ENCODE measurements at regions of chr15 and their contacts with region 1.

Region 1: GRCh38 chr15:94287794-94288246 is 56.5 kb downstream of the MCTP2 start:
- DNase-seq: peak; percentile 91
- ATAC-seq: peak; percentile 92
- H3K4me3 ChIP-seq: peak overlapping the region; percentile 2 to 56 (median 28)
- H3K4me3 Mint-ChIP-seq: peak overlapping the region; percentile 84
- H3K27ac ChIP-seq: peak overlapping the region; percentile 90 to 93
- H3K27ac Mint-ChIP-seq: peak overlapping the region; percentile 90
- H3K4me1 ChIP-seq: peaks cover 65 to 72% of the 10 kb centered on the region in 2 donors
- H3K4me1 Mint-ChIP-seq: peaks cover 72% of the 10 kb centered on the region
- H3K27me3 ChIP-seq: no peaks in the 10 kb centered on the region
- H3K27me3 Mint-ChIP-seq: no peaks in the 10 kb centered on the region
- CTCF ChIP-seq: no peak

Region 2: DNA sequence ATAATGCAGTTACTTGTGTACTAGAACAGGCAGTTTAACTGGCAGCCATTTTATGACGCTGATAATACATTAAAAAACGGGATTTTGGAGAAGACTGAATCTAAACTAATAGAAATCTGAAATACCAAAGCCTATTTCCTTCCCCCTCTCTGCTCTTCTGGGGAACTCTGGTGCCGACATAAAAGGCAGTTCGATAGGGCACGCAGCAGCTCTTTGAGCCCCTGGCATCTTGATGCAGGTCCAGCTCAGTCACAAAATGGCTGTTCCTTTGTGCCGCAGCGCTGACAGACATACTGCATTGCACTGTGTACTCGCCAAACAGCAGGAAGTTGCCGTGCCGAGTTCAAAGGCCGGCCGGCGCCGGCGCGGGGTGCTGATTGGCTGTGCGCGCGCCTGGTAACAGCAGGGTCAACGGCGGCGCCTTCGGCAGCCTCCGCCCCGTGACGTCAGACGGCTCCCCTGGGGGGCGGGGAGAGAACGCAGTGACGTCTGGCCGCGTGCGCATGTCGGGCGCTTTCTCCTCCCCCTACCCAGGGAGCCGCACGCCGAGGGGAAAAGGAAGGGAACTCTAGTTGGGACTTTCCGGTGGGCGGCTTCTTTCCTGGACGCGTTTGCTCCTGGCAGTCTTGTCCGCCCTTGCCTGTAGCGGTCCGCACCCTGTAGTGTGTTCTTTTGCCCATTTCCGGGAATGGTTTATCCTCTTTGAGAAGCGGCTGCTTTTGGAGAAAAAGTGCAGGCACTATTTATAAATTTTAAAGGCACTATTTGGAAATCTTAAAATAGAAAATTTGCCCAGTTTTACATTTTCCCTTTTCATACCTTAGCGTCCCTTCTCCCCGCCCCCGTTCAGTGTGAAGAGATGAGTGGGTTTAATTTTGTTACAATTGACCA is 1383.6 kb before region 1 on chr15:
- CTCF ChIA-PET with region 1: no interaction called
- POLR2A ChIA-PET with region 1: interaction called, 10 read pairs
- intact Hi-C with region 1: no loop called
- DNase-seq: peak; percentile 99
- ATAC-seq: peak; percentile 82
- H3K4me3 ChIP-seq: peak overlapping the region; percentile 64 to 100 (median 85)
- H3K4me3 Mint-ChIP-seq: peak overlapping the region; percentile 92
- H3K27ac ChIP-seq: peak overlapping the region; percentile 95 to 97
- H3K27ac Mint-ChIP-seq: peak overlapping the region; percentile 100
- H3K4me1 ChIP-seq: peaks cover 48 to 57% of the 10 kb centered on the region in 2 donors
- H3K4me1 Mint-ChIP-seq: peaks cover 64% of the 10 kb centered on the region
- H3K27me3 ChIP-seq: no peaks in the 10 kb centered on the region
- H3K27me3 Mint-ChIP-seq: no peaks in the 10 kb centered on the region
- CTCF ChIP-seq: no peak

Region 3: DNA sequence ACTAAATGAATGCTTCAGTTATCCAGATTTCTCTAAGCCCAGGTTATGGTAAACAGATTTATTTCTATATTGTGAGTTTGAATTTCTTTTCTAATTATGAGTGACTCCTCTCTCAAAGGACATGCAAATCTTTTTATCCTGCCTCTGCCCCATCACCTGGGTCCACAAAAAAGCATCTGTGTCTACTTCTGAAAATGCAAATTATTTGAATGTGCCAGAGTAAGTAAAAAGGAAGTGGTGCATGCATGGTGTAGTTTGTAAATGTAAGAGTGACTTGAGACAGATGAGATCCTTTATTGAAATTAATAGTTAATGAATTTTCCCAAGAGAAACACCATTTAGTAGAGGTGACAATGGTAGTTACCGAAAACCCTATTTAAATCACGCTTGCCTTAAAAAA is 29.6 kb before region 1 on chr15:
- CTCF ChIA-PET with region 1: interaction called, 17 read pairs
- POLR2A ChIA-PET with region 1: interaction called, 7 read pairs
- intact Hi-C with region 1: loop called (anchors 1 kb)
- DNase-seq: peak; percentile 85
- ATAC-seq: peak; percentile 74
- H3K4me3 ChIP-seq: peak overlapping the region in 3 of 5 experiments; percentile 18 to 25 (median 20)
- H3K4me3 Mint-ChIP-seq: peak overlapping the region; percentile 59
- H3K27ac ChIP-seq: peak overlapping the region; percentile 72 to 78
- H3K27ac Mint-ChIP-seq: peak overlapping the region; percentile 79
- H3K4me1 ChIP-seq: peaks cover 79 to 82% of the 10 kb centered on the region in 2 donors
- H3K4me1 Mint-ChIP-seq: peaks cover 83% of the 10 kb centered on the region
- H3K27me3 ChIP-seq: no peaks in the 10 kb centered on the region
- H3K27me3 Mint-ChIP-seq: no peaks in the 10 kb centered on the region
- CTCF ChIP-seq: no peak

Region 4: GRCh38 chr15:94272251-94272898 is 15.4 kb before region 1 on chr15:
- CTCF ChIA-PET with region 1: interaction called, 15 read pairs
- POLR2A ChIA-PET with region 1: no interaction called
- intact Hi-C with region 1: loop called (anchors 1 kb)
- DNase-seq: peak; percentile 73
- ATAC-seq: peak; percentile 72
- H3K4me3 ChIP-seq: peak overlapping the region in 1 of 5 experiments; percentile 5
- H3K4me3 Mint-ChIP-seq: no peak overlapping the region
- H3K27ac ChIP-seq: peak overlapping the region; percentile 27 to 71
- H3K27ac Mint-ChIP-seq: no peak overlapping the region
- H3K4me1 ChIP-seq: peaks cover 31 to 43% of the 10 kb centered on the region in 2 donors
- H3K4me1 Mint-ChIP-seq: peaks cover 18% of the 10 kb centered on the region
- H3K27me3 ChIP-seq: no peaks in the 10 kb centered on the region
- H3K27me3 Mint-ChIP-seq: no peaks in the 10 kb centered on the region
- CTCF ChIP-seq: no peak

Region 5: GRCh38 chr15:94306700-94307650 is 19.2 kb after region 1 on chr15:
- CTCF ChIA-PET with region 1: interaction called, 19 read pairs
- POLR2A ChIA-PET with region 1: interaction called, 9 read pairs
- intact Hi-C with region 1: loop called (anchors 1 kb)
- DNase-seq: peak; percentile 86
- ATAC-seq: peak; percentile 87
- H3K4me3 ChIP-seq: peak overlapping the region in 1 of 5 experiments; percentile 12
- H3K4me3 Mint-ChIP-seq: peak overlapping the region; percentile 64
- H3K27ac ChIP-seq: peak overlapping the region; percentile 58 to 64
- H3K27ac Mint-ChIP-seq: peak overlapping the region; percentile 91
- H3K4me1 ChIP-seq: peaks cover 27 to 41% of the 10 kb centered on the region in 2 donors
- H3K4me1 Mint-ChIP-seq: peaks cover 50% of the 10 kb centered on the region
- H3K27me3 ChIP-seq: no peaks in the 10 kb centered on the region
- H3K27me3 Mint-ChIP-seq: no peaks in the 10 kb centered on the region
- CTCF ChIP-seq: no peak

Measured in B cell (primary cell).